GM12878 (cell line): ENCODE measurements at regions of chr20 and their contacts with region 1.

Region 1: GRCh38 chr20:44683263-44684046 is 31.7 kb upstream of the CCN5 start:
- DNase-seq: peak; percentile 45
- ATAC-seq: peak; percentile 96
- H3K4me3 ChIP-seq: no peak overlapping the region
- H3K27ac ChIP-seq: no peak overlapping the region
- H3K4me1 ChIP-seq: peaks cover 6% of the 10 kb centered on the region
- H3K27me3 ChIP-seq: no peaks in the 10 kb centered on the region
- CTCF ChIP-seq: peak; percentile 78 to 91 (median 79); a peak in 5 of 6 replicates
- EP300 ChIP-seq: no peak
- POLR2A ChIP-seq: no peak
- RAD21 ChIP-seq: peak; percentile 92

Region 2: DNA sequence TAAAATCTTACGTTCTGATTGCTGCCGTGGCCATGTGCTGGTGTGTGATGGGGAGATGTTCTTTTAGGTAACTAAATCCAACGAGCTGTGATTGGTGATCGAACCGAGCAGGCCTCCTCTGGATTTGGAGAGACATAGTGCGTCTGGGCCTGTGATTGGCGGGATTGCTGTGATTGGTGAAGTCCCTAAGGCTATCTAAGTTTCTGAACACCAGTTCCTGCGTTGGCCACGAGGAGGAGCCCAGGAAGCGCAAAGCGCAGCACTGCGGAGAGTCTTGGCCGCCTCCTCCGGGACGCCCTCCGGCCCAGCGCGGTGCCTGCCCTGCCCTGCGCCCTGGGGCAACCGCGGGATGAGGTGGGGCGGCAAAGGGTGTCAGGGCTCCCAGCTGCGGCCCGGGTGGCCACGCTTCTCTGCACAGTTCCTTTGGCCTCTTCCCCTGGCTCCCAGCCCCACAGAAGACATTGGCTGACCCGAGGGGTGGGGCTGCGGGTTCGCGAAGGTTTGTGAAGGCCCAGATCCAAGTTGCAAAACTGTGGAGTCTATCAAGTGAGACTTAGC is 294.9 kb before region 1 on chr20:
- CTCF ChIA-PET with region 1: interaction called, 35 read pairs
- POLR2A ChIA-PET with region 1: no interaction called
- RAD21 ChIA-PET with region 1: no interaction called
- SMC1A ChIA-PET with region 1: interaction called, 10 read pairs
- in situ Hi-C with region 1: no loop called
- intact Hi-C with region 1: loop called (anchors 5 kb)
- DNase-seq: no peak
- ATAC-seq: peak; percentile 93
- H3K4me3 ChIP-seq: no peak overlapping the region
- H3K27ac ChIP-seq: no peak overlapping the region
- H3K4me1 ChIP-seq: no peaks in the 10 kb centered on the region
- H3K27me3 ChIP-seq: peaks cover 1 to 2% of the 10 kb centered on the region in 2 experiments; a peak in 2 of 4 replicates
- CTCF ChIP-seq: peak; percentile 78 to 90 (median 88)
- EP300 ChIP-seq: no peak
- POLR2A ChIP-seq: no peak
- RAD21 ChIP-seq: peak; percentile 73

Region 3: GRCh38 chr20:44485078-44485828 is 198.2 kb before region 1 on chr20:
- CTCF ChIA-PET with region 1: no interaction called
- POLR2A ChIA-PET with region 1: no interaction called
- RAD21 ChIA-PET with region 1: no interaction called
- SMC1A ChIA-PET with region 1: no interaction called
- in situ Hi-C with region 1: no loop called
- intact Hi-C with region 1: no loop called
- DNase-seq: no peak
- ATAC-seq: peak; percentile 17; the same call in 1 of the 3 replicates
- H3K4me3 ChIP-seq: no peak overlapping the region
- H3K27ac ChIP-seq: no peak overlapping the region
- H3K4me1 ChIP-seq: peaks cover 11% of the 10 kb centered on the region; the same call in 1 of the 2 replicates
- H3K27me3 ChIP-seq: no peaks in the 10 kb centered on the region
- CTCF ChIP-seq: no peak
- EP300 ChIP-seq: no peak
- POLR2A ChIP-seq: no peak
- RAD21 ChIP-seq: no peak

Region 4: GRCh38 chr20:44582311-44583025 is 101.0 kb before region 1 on chr20 and contains the start of gene PKIG:
- CTCF ChIA-PET with region 1: interaction called, 55 read pairs
- POLR2A ChIA-PET with region 1: no interaction called
- RAD21 ChIA-PET with region 1: interaction called, 31 read pairs
- SMC1A ChIA-PET with region 1: interaction called, 33 read pairs
- in situ Hi-C with region 1: no loop called
- intact Hi-C with region 1: no loop called
- DNase-seq: no peak
- ATAC-seq: peak; percentile 8
- H3K4me3 ChIP-seq: peak within 1 kb of the TSS; percentile 29
- H3K27ac ChIP-seq: peak within 1 kb of the TSS; percentile 77
- H3K4me1 ChIP-seq: peaks cover 80% of the 10 kb centered on the region
- H3K27me3 ChIP-seq: no peaks in the 10 kb centered on the region
- CTCF ChIP-seq: no peak
- EP300 ChIP-seq: 0 out of 4 replicates have a peak, but pooled peaks of 1 of the 2 experiments have one; percentile 6
- POLR2A ChIP-seq: no peak
- RAD21 ChIP-seq: no peak
- polyA plus RNA-seq, gene PKIG: 5.7 to 17.5 TPM

Region 5: DNA sequence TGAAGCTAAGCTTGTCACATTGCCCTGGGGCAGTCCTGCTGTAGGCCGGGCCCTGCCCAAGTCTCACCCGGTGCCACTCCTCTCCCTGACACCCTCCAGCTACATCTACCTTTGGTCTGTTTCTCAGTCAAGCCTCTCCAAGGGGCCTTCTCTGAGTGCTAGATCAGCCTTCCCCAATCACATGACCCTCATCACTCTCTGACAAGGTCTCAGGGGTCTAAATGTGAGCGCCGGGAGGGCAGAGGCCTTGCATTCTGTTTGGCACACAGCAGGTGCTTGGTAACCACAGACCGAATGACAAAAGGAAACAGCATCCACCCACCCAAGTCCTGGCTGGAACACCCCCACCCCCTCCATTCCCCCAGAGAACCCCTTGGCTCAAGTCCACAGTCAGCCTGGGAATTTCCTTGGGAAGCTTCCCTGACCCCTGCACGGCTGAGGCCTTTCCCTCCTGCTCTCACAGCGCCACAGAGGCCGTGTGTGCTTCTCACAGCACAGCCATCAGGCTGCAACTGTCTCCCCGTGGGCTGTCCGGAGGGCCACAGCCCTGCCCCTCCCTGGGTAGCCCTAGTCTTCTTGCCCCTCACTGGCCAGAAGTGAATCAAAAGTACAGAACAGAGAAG is 68.2 kb before region 1 on chr20:
- CTCF ChIA-PET with region 1: interaction called, 103 read pairs
- POLR2A ChIA-PET with region 1: interaction called, 4 read pairs
- RAD21 ChIA-PET with region 1: interaction called, 56 read pairs
- SMC1A ChIA-PET with region 1: interaction called, 58 read pairs
- in situ Hi-C with region 1: no loop called
- intact Hi-C with region 1: loop called (anchors 1 kb)
- DNase-seq: no peak
- ATAC-seq: peak; percentile 7; the same call in 2 of the 3 replicates
- H3K4me3 ChIP-seq: no peak overlapping the region
- H3K27ac ChIP-seq: peak overlapping the region; percentile 43; the same call in 1 of the 2 replicates
- H3K4me1 ChIP-seq: peaks cover 21% of the 10 kb centered on the region
- H3K27me3 ChIP-seq: no peaks in the 10 kb centered on the region
- CTCF ChIP-seq: no peak
- EP300 ChIP-seq: no peak
- POLR2A ChIP-seq: no peak
- RAD21 ChIP-seq: no peak

Region 6: GRCh38 chr20:44642203-44643153 is 41.0 kb before region 1 on chr20:
- CTCF ChIA-PET with region 1: interaction called, 134 read pairs
- POLR2A ChIA-PET with region 1: interaction called, 12 read pairs
- RAD21 ChIA-PET with region 1: interaction called, 47 read pairs
- SMC1A ChIA-PET with region 1: interaction called, 71 read pairs
- in situ Hi-C with region 1: no loop called
- intact Hi-C with region 1: loop called (anchors 2 kb)
- DNase-seq: peak; percentile 77
- ATAC-seq: peak; percentile 65
- H3K4me3 ChIP-seq: peak overlapping the region; percentile 16; the same call in 1 of the 2 replicates
- H3K27ac ChIP-seq: peak overlapping the region; percentile 99
- H3K4me1 ChIP-seq: peaks cover 68% of the 10 kb centered on the region
- H3K27me3 ChIP-seq: no peaks in the 10 kb centered on the region
- CTCF ChIP-seq: peak; percentile 18 to 42 (median 22); a peak in 5 of 6 replicates
- EP300 ChIP-seq: peak in 1 of 2 experiments; percentile 17; a peak in 1 of 4 replicates
- POLR2A ChIP-seq: peak; percentile 51; the same call in 1 of the 2 replicates
- RAD21 ChIP-seq: 0 out of 2 replicates have a peak, but pooled peaks have one; percentile 17

Region 7: DNA sequence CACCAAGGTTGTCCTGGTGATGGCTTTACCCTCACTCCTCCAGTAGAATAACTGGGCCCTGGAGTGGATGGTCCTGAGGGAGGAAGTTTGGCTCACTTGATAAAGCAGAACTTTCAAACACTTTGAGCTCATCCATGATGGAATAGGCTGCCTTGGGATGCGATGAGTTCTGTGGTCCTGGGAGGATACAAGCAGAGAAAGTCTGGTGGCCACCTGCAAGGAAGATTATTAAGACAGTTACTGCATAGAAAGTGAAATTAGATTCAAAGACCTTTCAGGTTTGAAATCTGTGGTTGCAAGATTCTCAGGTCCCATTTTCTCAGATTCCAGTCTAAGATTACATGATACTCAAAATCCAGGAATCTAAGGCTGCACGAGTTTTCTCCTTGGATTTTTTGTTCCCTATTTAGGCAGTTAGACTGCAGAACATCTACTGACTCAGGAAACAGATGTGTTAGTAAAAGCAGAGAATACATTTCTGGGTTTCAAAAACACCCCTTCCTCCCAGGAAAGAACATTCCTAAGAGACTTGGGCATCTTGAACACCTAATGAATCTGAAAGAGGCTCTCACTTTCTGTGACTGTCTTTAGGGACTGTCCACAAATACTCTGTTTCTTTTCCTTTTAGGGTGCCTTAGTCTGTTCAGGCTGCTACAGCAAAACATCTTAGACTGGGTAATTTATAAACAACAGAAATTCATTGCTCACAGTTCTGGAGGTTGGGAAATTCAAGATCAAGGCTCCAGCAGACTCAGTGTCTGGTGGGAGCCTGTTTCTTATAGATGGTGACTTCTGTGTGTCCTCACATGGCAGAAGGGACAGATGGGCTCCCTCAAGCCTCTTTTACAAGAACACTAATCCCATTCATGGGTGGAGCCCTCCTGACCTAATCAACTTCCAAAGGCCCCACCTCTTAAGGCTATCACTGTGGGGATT is 12.1 kb after region 1 on chr20:
- CTCF ChIA-PET with region 1: interaction called, 11 read pairs
- POLR2A ChIA-PET with region 1: no interaction called
- RAD21 ChIA-PET with region 1: interaction called, 3 read pairs
- SMC1A ChIA-PET with region 1: interaction called, 7 read pairs
- in situ Hi-C with region 1: no loop called
- intact Hi-C with region 1: no loop called
- DNase-seq: no peak
- ATAC-seq: peak; percentile 65
- H3K4me3 ChIP-seq: 0 out of 2 replicates have a peak overlapping the region, but pooled peaks have one; percentile 4
- H3K27ac ChIP-seq: peak overlapping the region; percentile 46; the same call in 1 of the 2 replicates
- H3K4me1 ChIP-seq: peaks cover 25% of the 10 kb centered on the region
- H3K27me3 ChIP-seq: no peaks in the 10 kb centered on the region; a peak in 1 of 4 replicates
- CTCF ChIP-seq: no peak
- EP300 ChIP-seq: no peak
- POLR2A ChIP-seq: no peak
- RAD21 ChIP-seq: no peak

Region 8: GRCh38 chr20:44747166-44748004 is 63.9 kb after region 1 on chr20:
- CTCF ChIA-PET with region 1: interaction called, 16 read pairs
- POLR2A ChIA-PET with region 1: interaction called, 3 read pairs
- RAD21 ChIA-PET with region 1: interaction called, 4 read pairs
- SMC1A ChIA-PET with region 1: interaction called, 9 read pairs
- in situ Hi-C with region 1: no loop called
- intact Hi-C with region 1: no loop called
- DNase-seq: no peak
- ATAC-seq: peak; percentile 81
- H3K4me3 ChIP-seq: no peak overlapping the region
- H3K27ac ChIP-seq: no peak overlapping the region
- H3K4me1 ChIP-seq: no peaks in the 10 kb centered on the region
- H3K27me3 ChIP-seq: peaks cover 13 to 16% of the 10 kb centered on the region in 2 experiments
- CTCF ChIP-seq: peak; percentile 66 to 78 (median 73)
- EP300 ChIP-seq: no peak
- POLR2A ChIP-seq: no peak
- RAD21 ChIP-seq: peak; percentile 49

Region 9: GRCh38 chr20:44819936-44820335 is 136.5 kb after region 1 on chr20:
- CTCF ChIA-PET with region 1: no interaction called
- POLR2A ChIA-PET with region 1: no interaction called
- RAD21 ChIA-PET with region 1: no interaction called
- SMC1A ChIA-PET with region 1: no interaction called
- in situ Hi-C with region 1: no loop called
- intact Hi-C with region 1: no loop called
- DNase-seq: no peak
- ATAC-seq: no peak
- H3K4me3 ChIP-seq: no peak overlapping the region
- H3K27ac ChIP-seq: no peak overlapping the region
- H3K4me1 ChIP-seq: no peaks in the 10 kb centered on the region
- H3K27me3 ChIP-seq: peaks cover 0 to 3% of the 10 kb centered on the region in 2 experiments; a peak in 2 of 4 replicates
- CTCF ChIP-seq: no peak
- EP300 ChIP-seq: no peak
- POLR2A ChIP-seq: no peak
- RAD21 ChIP-seq: no peak